Sigmoid colon (tissue), 7 donors: ENCODE measurements at regions of chr9 and their contacts with region 1.

Region 1: DNA sequence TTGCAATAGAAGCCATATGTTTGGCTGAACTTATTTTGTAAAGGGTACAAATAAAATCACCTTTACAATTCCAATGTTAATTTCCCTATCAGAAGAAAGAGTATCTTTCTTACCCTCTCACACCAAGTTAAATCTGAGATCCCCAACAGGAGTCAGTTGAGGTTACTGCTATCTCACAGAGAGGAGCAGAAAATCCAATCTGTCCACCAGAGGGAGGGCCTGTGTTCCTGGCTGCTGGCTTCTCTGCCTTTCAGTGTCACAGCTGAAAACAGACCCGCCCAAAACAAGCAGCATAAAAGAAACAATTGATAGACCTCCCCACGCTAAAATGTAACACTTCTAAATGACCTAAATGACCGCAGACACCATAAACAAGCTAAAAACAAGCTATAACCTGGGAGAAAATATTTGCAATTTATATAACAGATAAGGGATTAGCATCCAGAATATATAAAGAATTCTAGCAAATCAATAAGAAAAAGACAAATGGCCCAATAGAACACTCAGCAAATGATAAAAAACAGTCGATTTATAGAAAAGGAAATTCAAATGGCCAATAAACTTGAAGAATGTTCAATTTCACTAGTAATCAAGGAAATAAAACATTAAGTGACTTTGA is 24.5 kb upstream of the MVB12B start:
- DNase-seq: no peak
- H3K4me3 ChIP-seq: no peak overlapping the region
- H3K27ac ChIP-seq: no peak overlapping the region
- H3K4me1 ChIP-seq: peaks cover 0 to 7% (median 0%) of the 10 kb centered on the region in 4 donors
- H3K27me3 ChIP-seq: peaks cover 0 to 5% (median 0%) of the 10 kb centered on the region in 3 donors
- CTCF ChIP-seq: peak; percentile 31 to 62 (median 58)
- EP300 ChIP-seq: no peak
- POLR2A ChIP-seq: no peak

Region 2: GRCh38 chr9:126398403-126399058 is 96.4 kb after region 1 on chr9:
- intact Hi-C with region 1: loop called (anchors 2 kb)
- DNase-seq: peak; percentile 86
- H3K4me3 ChIP-seq: no peak overlapping the region
- H3K27ac ChIP-seq: no peak overlapping the region
- H3K4me1 ChIP-seq: peaks cover 0 to 10% (median 3%) of the 10 kb centered on the region in 4 donors
- H3K27me3 ChIP-seq: no peaks in the 10 kb centered on the region
- CTCF ChIP-seq: peak; percentile 76 to 95 (median 92)
- EP300 ChIP-seq: no peak
- POLR2A ChIP-seq: no peak

Region 3: GRCh38 chr9:126490871-126491567 is 188.9 kb after region 1 on chr9:
- intact Hi-C with region 1: loop called (anchors 5 kb)
- DNase-seq: no peak
- H3K4me3 ChIP-seq: no peak overlapping the region
- H3K27ac ChIP-seq: no peak overlapping the region
- H3K4me1 ChIP-seq: no peaks in the 10 kb centered on the region
- H3K27me3 ChIP-seq: no peaks in the 10 kb centered on the region
- CTCF ChIP-seq: peak; percentile 78 to 98 (median 93)
- EP300 ChIP-seq: no peak
- POLR2A ChIP-seq: no peak